ENCODE measurements at regions of chr7 and their contacts with region 1.

Region 1: GRCh38 chr7:134514663-134515062 is 12.7 kb upstream of the AKR1B10 start:
- DNase-seq: no peak
- ATAC-seq: peak; percentile 80 to 81
- H3K4me3 ChIP-seq: no peak overlapping the region
- H3K27ac ChIP-seq: no peak overlapping the region
- H3K4me1 ChIP-seq: no peaks in the 10 kb centered on the region
- H3K27me3 ChIP-seq: no peaks in the 10 kb centered on the region
- CTCF ChIP-seq: peak; percentile 74

Region 2: DNA sequence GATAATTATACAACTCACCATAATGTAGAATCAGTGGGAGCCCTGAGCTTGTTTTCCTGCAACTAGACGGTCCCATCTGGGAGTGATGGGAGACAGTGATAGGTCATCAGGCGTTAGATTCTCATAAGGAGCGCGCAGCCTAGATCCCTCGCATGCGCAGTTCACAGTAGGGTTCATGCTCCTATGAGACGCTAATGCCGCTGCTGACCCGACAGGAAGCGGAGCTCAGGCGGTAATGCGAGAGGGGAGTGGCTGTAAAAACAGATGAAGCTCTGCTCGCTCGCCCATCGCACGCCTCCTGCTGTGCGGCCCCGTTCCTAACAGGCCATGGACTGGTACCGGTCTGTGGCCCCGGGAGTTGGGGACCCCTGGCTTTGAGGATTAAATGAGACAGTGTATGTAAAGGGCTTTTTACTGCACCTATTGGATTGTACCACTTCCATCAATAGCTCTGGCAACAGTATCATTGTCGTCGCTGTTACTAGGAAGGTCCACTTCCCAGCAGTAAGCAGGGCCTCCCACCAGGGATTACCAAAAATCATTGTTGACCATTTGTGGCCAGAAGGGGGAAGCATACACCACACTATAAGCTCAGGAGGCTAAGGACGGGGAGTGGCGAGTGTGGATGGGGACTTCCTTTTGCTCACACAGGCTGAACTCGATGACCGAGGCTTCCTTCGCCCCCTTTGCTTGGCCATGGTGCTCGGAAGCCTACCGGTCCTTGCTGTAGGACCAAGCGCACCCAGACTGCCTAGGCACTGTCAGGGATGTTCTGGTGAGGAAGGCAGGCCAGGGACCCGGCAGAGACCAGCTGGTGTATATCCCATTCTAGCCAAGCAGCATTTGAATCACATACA is 82.1 kb before region 1 on chr7:
- intact Hi-C with region 1: loop called (anchors 5 kb)
- DNase-seq: peak; percentile 87
- ATAC-seq: peak; percentile 97 to 98
- H3K4me3 ChIP-seq: peak overlapping the region; percentile 47
- H3K27ac ChIP-seq: peak overlapping the region; percentile 80
- H3K4me1 ChIP-seq: peaks cover 4% of the 10 kb centered on the region
- H3K27me3 ChIP-seq: no peaks in the 10 kb centered on the region
- CTCF ChIP-seq: peak; percentile 74

Region 3: GRCh38 chr7:134605973-134606923 is 91.6 kb after region 1 on chr7:
- intact Hi-C with region 1: loop called (anchors 10 kb)
- DNase-seq: peak; percentile 52
- ATAC-seq: peak; percentile 91
- H3K4me3 ChIP-seq: no peak overlapping the region
- H3K27ac ChIP-seq: peak overlapping the region; percentile 10
- H3K4me1 ChIP-seq: peaks cover 13% of the 10 kb centered on the region
- H3K27me3 ChIP-seq: no peaks in the 10 kb centered on the region
- CTCF ChIP-seq: peak; percentile 92